ENCODE measurements at regions of chr4 and their contacts with region 1.

Region 1: GRCh38 chr4:82739316-82740179 is 59.0 kb downstream of the SCD5 start:
- DNase-seq: peak; percentile 82
- H3K4me3 ChIP-seq: no peak overlapping the region
- H3K27ac ChIP-seq: no peak overlapping the region
- H3K4me1 ChIP-seq: no peaks in the 10 kb centered on the region
- H3K27me3 ChIP-seq: no peaks in the 10 kb centered on the region
- CTCF ChIP-seq: peak; percentile 99 to 100
- POLR2A ChIP-seq: no peak

Region 2: DNA sequence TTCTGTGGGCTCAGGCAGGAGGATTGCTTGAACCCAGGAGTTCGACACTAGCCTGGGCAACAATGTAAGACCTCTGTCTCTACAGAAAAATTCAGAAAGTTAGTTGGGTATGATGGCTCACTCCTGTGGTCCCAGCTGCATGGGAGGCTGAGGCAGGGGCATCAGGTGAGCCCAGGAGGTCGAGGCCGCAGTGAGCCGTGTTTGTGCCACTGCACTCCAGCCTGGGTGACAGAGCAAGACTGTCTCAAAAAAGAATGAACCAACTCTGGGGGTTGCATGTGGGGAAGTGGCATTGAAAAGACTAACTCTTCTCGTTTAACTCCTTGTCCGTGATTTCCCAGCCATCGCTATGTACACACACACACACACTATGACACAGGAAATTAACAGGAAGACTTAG is 282.3 kb before region 1 on chr4:
- CTCF ChIA-PET with region 1: interaction called, 500 read pairs
- POLR2A ChIA-PET with region 1: no interaction called
- dilution Hi-C with region 1: no loop called
- intact Hi-C with region 1: loop called (anchors 1 kb)
- DNase-seq: peak; percentile 7
- H3K4me3 ChIP-seq: no peak overlapping the region
- H3K27ac ChIP-seq: no peak overlapping the region
- H3K4me1 ChIP-seq: no peaks in the 10 kb centered on the region
- H3K27me3 ChIP-seq: no peaks in the 10 kb centered on the region
- CTCF ChIP-seq: no peak
- POLR2A ChIP-seq: no peak

Region 3: DNA sequence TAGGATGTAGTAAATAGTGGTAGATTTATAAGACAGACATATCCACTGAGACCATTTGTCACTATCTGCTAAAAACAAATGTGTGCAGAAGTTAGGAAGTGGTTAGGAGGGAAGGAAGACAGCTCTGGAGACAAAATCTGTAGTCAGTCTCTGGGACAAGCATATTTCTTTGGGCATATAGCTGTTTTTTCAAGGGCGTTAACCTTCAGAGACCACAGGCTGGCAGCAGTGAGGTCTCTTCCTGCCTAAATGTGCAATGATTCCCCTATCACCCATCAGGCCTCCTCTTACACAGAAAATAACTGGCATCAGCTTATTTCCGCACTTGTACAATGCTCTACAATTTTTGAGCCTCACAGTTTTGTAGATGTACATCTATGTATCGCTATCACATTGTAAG is 184.3 kb before region 1 on chr4:
- CTCF ChIA-PET with region 1: interaction called, 11 read pairs
- POLR2A ChIA-PET with region 1: no interaction called
- dilution Hi-C with region 1: no loop called
- intact Hi-C with region 1: no loop called
- DNase-seq: no peak
- H3K4me3 ChIP-seq: no peak overlapping the region
- H3K27ac ChIP-seq: no peak overlapping the region
- H3K4me1 ChIP-seq: no peaks in the 10 kb centered on the region
- H3K27me3 ChIP-seq: peaks cover 0 to 6% of the 10 kb centered on the region in 2 experiments
- CTCF ChIP-seq: peak in 1 of 2 donors; percentile 12
- POLR2A ChIP-seq: no peak

Region 4: DNA sequence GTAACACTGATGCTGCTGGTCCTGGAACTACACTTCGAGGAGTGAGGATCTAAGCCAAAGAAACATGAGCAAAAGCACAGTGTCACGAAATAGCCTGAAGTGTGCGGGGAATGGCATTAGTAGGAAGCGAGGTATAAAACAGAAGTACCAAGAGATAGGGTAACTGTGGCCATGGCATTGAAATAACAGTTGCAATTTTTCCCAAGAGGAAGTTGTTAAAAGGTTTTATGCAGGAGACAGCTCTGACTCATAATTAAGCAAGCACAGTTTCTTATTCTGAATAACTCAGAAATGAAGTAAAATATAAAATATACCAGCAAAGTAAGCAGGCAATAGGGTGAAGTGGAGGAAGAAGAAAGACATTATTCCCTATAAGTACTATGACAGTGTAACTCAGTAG is 87.5 kb before region 1 on chr4:
- CTCF ChIA-PET with region 1: interaction called, 11 read pairs
- POLR2A ChIA-PET with region 1: no interaction called
- dilution Hi-C with region 1: no loop called
- intact Hi-C with region 1: no loop called
- DNase-seq: peak; percentile 55
- H3K4me3 ChIP-seq: no peak overlapping the region
- H3K27ac ChIP-seq: no peak overlapping the region
- H3K4me1 ChIP-seq: peaks cover 7% of the 10 kb centered on the region
- H3K27me3 ChIP-seq: no peaks in the 10 kb centered on the region
- CTCF ChIP-seq: no peak
- POLR2A ChIP-seq: no peak

Region 5: DNA sequence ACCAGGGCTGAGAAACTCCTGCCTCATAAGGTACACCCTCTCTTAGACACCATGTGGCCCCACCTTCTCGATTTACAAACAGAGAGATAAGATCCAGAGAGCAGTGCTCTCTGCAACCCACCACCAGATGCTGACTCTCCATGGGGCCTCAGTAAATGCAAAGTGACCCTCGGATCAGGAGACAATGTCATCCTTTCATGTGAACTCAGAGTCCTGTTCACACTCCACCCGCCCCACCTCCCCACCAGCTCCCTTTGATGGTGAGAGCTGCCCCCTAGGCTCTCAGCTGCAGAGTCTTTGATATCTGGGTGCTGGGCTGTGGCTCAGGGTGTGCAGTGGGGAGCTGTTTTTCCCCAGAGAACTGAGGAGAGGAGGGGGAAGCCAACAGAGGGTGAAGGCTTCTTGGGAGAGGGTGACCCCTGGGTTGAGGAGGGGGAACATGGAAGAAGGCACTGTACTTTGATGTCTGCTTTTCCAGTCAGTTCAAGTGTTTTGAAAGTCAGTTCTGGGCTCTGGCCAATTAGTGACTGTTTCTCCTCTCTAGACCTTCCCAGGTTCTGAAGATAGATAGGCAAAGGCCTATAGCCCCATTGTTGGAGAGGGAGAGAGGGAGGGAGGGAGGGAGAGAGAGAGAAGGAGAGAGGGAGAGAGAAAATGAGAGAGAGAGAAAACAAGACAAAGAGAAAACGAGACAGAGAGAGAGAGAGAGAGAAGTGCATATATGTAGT is 29.2 kb before region 1 on chr4:
- CTCF ChIA-PET with region 1: interaction called, 18 read pairs
- POLR2A ChIA-PET with region 1: no interaction called
- dilution Hi-C with region 1: no loop called
- intact Hi-C with region 1: no loop called
- DNase-seq: peak; percentile 23
- H3K4me3 ChIP-seq: no peak overlapping the region
- H3K27ac ChIP-seq: no peak overlapping the region
- H3K4me1 ChIP-seq: peaks cover 20% of the 10 kb centered on the region
- H3K27me3 ChIP-seq: no peaks in the 10 kb centered on the region
- CTCF ChIP-seq: no peak
- POLR2A ChIP-seq: no peak

Region 6: DNA sequence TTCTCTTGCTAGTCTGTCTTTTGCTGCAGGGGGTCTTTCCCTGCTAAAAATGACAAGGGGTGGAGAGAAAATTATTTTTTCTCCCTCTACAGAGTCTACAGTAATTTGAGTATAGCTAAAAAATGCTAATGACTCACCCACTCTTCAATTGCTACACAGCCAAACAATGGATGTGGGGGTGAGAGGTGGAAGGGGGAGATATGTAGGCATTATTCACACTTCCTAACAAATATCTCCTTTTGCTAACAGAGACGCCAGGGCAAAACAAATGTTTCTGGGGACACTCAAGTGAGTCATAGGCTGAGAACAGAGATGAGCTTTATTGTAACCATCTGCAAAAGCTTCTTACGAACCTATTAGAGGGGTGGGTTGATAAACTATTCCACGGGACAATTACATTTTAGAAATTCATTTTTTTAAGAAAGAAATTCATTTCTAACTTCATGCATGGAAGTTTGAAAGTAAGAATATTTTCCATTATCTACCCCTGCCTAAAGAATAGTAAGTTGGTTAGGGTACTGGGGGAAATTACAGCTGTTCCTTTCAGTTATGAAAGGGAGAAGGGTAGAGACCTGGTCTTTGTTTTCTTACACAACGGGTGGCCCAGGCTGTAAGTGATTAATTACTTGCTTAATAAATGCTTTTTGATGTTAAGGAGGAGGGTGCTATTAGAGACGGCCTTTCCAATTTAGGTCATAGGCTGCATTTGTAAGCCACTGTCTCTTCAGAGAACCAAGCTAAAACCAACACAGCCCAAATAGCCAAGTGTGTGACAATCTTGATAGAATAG is 46.3 kb after region 1 on chr4:
- CTCF ChIA-PET with region 1: interaction called, 29 read pairs
- POLR2A ChIA-PET with region 1: no interaction called
- dilution Hi-C with region 1: no loop called
- intact Hi-C with region 1: loop called (anchors 2 kb)
- DNase-seq: peak; percentile 98
- H3K4me3 ChIP-seq: peak overlapping the region; percentile 12 to 69 (median 21)
- H3K27ac ChIP-seq: peak overlapping the region; percentile 98
- H3K4me1 ChIP-seq: peaks cover 44% of the 10 kb centered on the region
- H3K27me3 ChIP-seq: no peaks in the 10 kb centered on the region
- CTCF ChIP-seq: no peak
- POLR2A ChIP-seq: no peak